GM12878 (cell line): ENCODE measurements at regions of chr12 and their contacts with region 1.

Region 1: DNA sequence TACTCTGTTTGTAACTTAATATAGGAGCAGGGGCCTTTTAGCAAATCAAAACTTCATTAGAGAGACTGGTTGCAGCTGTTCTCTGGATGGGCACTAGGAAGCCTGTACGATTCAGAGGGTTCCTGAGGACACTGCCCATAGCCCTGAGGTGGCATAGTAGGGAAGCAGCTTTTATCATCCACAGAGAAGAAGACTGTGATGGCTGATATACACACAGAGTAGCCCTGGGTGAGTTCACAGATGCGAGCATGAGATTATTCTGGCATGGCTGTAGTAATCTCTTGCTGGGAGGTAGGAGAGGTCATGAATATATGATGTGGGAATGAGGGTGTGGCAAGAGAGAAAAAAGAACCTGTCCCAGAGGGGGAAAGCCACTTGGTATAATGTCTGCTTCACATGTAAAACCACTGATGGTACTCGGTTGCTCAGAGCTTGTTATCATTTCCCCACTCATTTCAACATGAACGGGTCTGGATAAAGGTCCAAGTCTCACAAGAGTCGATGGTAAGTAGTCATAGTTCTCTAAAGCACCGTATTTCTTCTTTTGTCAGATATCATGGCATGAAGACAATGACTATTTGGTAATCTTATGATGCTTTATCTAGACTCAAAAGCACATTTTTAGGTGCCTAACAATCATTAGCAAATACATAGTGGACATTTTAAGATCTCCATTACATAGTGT is 52.0 kb downstream of the PEBP1 start:
- DNase-seq: no peak
- ATAC-seq: no peak
- H3K4me3 ChIP-seq: no peak overlapping the region
- H3K27ac ChIP-seq: no peak overlapping the region
- H3K4me1 ChIP-seq: peaks cover 23% of the 10 kb centered on the region
- H3K27me3 ChIP-seq: no peaks in the 10 kb centered on the region
- CTCF ChIP-seq: no peak
- EP300 ChIP-seq: no peak
- POLR2A ChIP-seq: no peak
- RAD21 ChIP-seq: no peak

Region 2: GRCh38 chr12:118135788-118136558 is 51.9 kb before region 1 on chr12 and contains the start of gene PEBP1:
- CTCF ChIA-PET with region 1: interaction called, 13 read pairs
- POLR2A ChIA-PET with region 1: no interaction called
- RAD21 ChIA-PET with region 1: interaction called, 3 read pairs
- SMC1A ChIA-PET with region 1: interaction called, 3 read pairs
- in situ Hi-C with region 1: no loop called
- intact Hi-C with region 1: no loop called
- DNase-seq: peak; percentile 77
- ATAC-seq: peak; percentile 98
- H3K4me3 ChIP-seq: peak within 1 kb of the TSS; percentile 86
- H3K27ac ChIP-seq: peak within 1 kb of the TSS; percentile 86
- H3K4me1 ChIP-seq: peaks cover 11% of the 10 kb centered on the region
- H3K27me3 ChIP-seq: no peaks in the 10 kb centered on the region
- CTCF ChIP-seq: no peak
- EP300 ChIP-seq: no peak
- POLR2A ChIP-seq: peak; percentile 97
- RAD21 ChIP-seq: no peak
- polyA plus RNA-seq, gene PEBP1: 79.4 to 150 TPM

Region 3: DNA sequence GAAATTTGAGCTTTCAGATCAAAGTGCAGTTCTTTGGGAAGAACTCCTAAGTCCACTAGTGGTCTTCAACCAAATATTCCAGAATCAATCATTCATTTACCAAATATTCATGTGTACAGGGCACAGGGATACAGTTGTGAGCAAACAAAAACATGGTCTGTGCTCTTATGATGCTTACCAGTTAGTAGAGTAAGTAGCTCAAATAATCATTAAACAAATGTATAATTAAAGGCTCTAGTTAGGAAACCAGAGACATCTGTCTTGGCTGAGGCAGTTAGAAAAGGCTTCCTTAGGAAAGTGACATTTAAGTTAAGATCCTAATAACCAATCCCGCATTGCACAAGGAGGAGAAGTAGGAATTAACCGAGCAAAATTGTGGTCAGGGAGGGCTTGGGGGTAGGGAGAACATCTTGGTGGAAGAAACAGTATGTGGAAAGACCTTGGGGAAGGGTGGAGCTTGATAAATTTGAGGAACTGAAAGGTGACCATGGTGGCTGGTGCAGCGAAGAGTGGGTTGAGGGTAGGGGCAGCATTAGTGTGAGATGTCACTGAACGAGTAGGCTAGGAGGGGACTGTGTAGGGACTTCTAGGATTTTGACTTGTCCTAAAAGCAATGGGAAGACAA is 12.0 kb before region 1 on chr12:
- CTCF ChIA-PET with region 1: interaction called, 9 read pairs
- POLR2A ChIA-PET with region 1: no interaction called
- RAD21 ChIA-PET with region 1: interaction called, 5 read pairs
- SMC1A ChIA-PET with region 1: interaction called, 18 read pairs
- in situ Hi-C with region 1: no loop called
- intact Hi-C with region 1: no loop called
- DNase-seq: peak; percentile 45
- ATAC-seq: peak; percentile 99
- H3K4me3 ChIP-seq: no peak overlapping the region
- H3K27ac ChIP-seq: peak overlapping the region; percentile 22; the same call in 1 of the 2 replicates
- H3K4me1 ChIP-seq: peaks cover 8% of the 10 kb centered on the region
- H3K27me3 ChIP-seq: no peaks in the 10 kb centered on the region
- CTCF ChIP-seq: no peak
- EP300 ChIP-seq: no peak
- POLR2A ChIP-seq: no peak
- RAD21 ChIP-seq: no peak

Region 4: GRCh38 chr12:118237052-118237665 is 49.3 kb after region 1 on chr12:
- CTCF ChIA-PET with region 1: interaction called, 6 read pairs
- POLR2A ChIA-PET with region 1: interaction called, 3 read pairs
- RAD21 ChIA-PET with region 1: interaction called, 18 read pairs
- SMC1A ChIA-PET with region 1: interaction called, 10 read pairs
- in situ Hi-C with region 1: no loop called
- intact Hi-C with region 1: loop called (anchors 5 kb)
- DNase-seq: peak; percentile 65
- ATAC-seq: peak; percentile 93
- H3K4me3 ChIP-seq: no peak overlapping the region
- H3K27ac ChIP-seq: peak overlapping the region; percentile 75
- H3K4me1 ChIP-seq: peaks cover 26% of the 10 kb centered on the region
- H3K27me3 ChIP-seq: no peaks in the 10 kb centered on the region
- CTCF ChIP-seq: no peak
- EP300 ChIP-seq: peak; percentile 27 to 76; a peak in 1 of 4 replicates
- POLR2A ChIP-seq: no peak
- RAD21 ChIP-seq: no peak

Region 5: GRCh38 chr12:118312578-118312977 is 124.7 kb after region 1 on chr12:
- CTCF ChIA-PET with region 1: interaction called, 17 read pairs
- POLR2A ChIA-PET with region 1: interaction called, 3 read pairs
- RAD21 ChIA-PET with region 1: interaction called, 7 read pairs
- SMC1A ChIA-PET with region 1: interaction called, 17 read pairs
- in situ Hi-C with region 1: no loop called
- intact Hi-C with region 1: loop called (anchors 2 kb)
- DNase-seq: peak; percentile 73
- ATAC-seq: peak; percentile 87
- H3K4me3 ChIP-seq: peak overlapping the region; percentile 47; the same call in 1 of the 2 replicates
- H3K27ac ChIP-seq: peak overlapping the region; percentile 82
- H3K4me1 ChIP-seq: peaks cover 40% of the 10 kb centered on the region
- H3K27me3 ChIP-seq: no peaks in the 10 kb centered on the region
- CTCF ChIP-seq: no peak
- EP300 ChIP-seq: peak in 1 of 2 experiments; percentile 38; a peak in 2 of 4 replicates
- POLR2A ChIP-seq: no peak
- RAD21 ChIP-seq: no peak